HEK293 (cell line): ENCODE measurements at regions of chr19 and their contacts with region 1.

Region 1: GRCh38 chr19:6218491-6219162 is 61.1 kb downstream of the MLLT1 start:
- H3K4me3 ChIP-seq: no peak overlapping the region
- H3K27ac ChIP-seq: no peak overlapping the region
- H3K4me1 ChIP-seq: peaks cover 8% of the 10 kb centered on the region
- CTCF ChIP-seq: peak; percentile 91

Region 2: DNA sequence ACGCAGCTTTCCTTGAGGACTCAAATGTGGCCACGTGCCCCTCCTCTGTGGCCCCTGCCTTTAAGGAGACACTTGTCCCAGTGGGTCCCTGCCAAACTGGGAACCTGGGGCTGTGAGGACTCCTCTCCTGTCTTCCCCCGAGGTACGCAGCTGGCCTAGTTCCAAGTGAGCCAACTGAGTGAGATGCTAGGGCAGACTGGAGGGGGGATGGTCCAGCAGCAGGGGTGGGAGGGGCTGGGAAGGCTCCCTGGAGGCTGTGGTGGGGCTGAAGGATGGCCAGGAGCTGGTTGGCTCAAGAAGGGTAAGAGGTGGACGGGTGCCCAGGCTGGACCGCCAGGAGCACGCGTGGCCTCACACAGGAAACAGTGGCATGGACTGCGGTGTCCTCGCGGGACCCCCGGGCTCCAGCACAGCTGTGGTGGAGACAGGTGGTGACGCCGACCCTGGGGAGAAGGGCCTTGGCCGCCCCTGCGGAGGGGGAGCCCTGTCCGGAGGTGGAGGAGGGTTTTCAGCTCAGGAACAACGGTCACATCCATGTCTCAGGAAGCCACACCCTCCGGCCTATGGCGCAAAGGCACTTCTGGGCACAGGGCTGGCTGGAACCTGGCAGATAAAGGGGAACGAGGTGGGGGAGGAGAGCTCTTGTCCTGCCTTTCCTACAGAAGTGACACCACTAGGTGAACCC is 15.3 kb after region 1 on chr19:
- CTCF ChIA-PET with region 1: interaction called, 11 read pairs
- POLR2A ChIA-PET with region 1: no interaction called
- H3K4me3 ChIP-seq: no peak overlapping the region
- H3K27ac ChIP-seq: no peak overlapping the region
- H3K4me1 ChIP-seq: no peaks in the 10 kb centered on the region; the same call in 1 of the 2 replicates
- CTCF ChIP-seq: no peak

Region 3: DNA sequence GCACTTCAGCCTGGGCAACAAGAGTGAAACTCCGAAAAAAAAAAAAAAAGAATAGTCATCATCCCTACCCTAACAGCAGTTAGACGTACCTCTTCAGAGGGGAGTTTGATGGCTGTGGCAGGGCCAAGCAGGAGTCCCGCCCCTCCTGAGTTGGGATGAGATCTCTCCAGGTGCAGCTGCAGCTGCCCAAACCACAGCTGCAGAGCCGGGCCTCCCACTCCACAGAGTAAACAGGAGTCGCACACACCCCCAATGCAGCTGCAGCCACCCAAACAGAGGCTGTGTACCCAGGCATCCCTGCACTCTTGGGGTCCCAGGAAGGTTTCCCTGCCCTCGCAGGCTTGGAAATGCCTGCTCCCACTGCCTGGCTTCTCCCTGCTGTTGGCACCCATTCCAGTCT is 78.6 kb after region 1 on chr19:
- CTCF ChIA-PET with region 1: interaction called, 13 read pairs
- POLR2A ChIA-PET with region 1: no interaction called
- H3K4me3 ChIP-seq: no peak overlapping the region
- H3K27ac ChIP-seq: no peak overlapping the region
- H3K4me1 ChIP-seq: no peaks in the 10 kb centered on the region
- CTCF ChIP-seq: no peak